ENCODE measurements at regions of chr10 and their contacts with region 1.

Region 1: GRCh38 chr10:118241229-118242137 is 100.6 kb downstream of the FAM204A start:
- DNase-seq: peak; percentile 66 to 93 (median 81)
- H3K4me3 ChIP-seq: peak overlapping the region in 50 of 59 donors; percentile 6 to 57 (median 36)
- H3K27ac ChIP-seq: peak overlapping the region in 2 of 59 donors; percentile 57 to 65
- H3K27me3 ChIP-seq: peaks cover 0 to 66% (median 38%) of the 10 kb centered on the region in 45 donors
- CTCF ChIP-seq: peak; percentile 88 to 100 (median 97)

Region 2: DNA sequence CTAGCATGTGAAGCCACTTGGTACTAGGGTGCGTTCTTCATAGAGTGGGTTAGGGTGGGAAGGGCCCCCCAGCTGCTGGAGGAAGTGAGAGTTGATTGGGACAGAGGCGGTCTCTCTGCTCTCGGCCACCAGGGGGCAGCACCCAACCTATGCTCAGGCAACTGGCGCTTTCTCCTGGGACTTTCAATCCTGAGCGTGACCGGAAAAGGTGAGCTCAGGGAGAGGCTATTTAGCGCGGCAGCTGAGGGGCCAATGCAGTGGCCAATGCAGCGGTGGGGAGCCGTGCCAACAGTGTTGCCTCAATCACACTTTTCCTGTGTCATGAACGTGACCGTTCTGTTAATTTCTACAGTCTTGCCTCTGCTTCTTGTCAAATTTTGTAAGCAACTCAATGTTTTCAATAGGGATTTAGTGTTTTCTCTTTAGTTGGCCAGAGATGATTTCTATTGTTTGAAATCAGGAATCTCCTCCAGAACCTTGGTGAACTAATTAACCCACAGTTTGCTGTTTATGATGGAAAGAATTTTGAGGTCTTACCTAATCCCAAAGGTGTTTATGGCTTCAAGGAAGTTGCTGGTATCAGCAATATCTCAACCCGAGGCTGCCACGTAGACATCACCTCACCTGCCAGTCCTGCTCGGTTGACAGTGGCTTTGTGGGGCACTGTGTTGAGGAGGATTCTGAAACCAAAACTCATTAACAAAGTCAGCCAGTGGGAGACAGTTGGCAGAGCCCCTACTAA is 798.4 kb before region 1 on chr10:
- intact Hi-C with region 1: loop called in 1 of 2 experiments (anchors 5 kb)
- DNase-seq: peak; percentile 54 to 81 (median 74)
- H3K4me3 ChIP-seq: peak overlapping the region in 20 of 59 donors; percentile 13 to 44 (median 32)
- H3K27ac ChIP-seq: peak overlapping the region in 6 of 59 donors; percentile 6 to 48 (median 29)
- H3K27me3 ChIP-seq: peaks cover 0 to 8% (median 0%) of the 10 kb centered on the region in 45 donors
- CTCF ChIP-seq: peak; percentile 74 to 97 (median 89)

Region 3: DNA sequence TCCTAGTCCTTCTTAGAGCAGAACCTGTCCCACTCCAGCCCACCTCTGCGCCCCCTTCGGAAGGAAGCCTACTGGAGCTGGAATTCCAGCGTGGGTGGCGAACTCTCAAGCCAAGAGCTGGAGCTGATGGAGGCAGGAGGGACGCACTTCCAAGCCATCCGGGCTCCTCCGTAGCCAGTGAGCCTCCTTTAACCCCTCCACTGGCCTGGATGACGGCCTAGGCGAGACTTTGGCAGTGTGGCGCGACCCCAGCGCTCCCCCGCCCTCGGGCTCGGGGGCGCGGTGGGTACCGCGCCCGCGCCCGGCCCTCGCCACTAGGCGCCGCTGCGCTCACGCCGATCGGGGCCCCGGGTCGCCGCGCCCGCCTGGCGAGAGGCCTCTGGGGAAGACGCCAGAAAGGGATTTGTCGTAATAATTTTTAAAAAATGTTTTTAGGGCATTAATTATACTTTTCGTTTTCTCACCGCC is 704.0 kb before region 1 on chr10:
- intact Hi-C with region 1: loop called (anchors 1 to 5 kb)
- DNase-seq: no peak
- H3K4me3 ChIP-seq: peak overlapping the region in 49 of 59 donors; percentile 7 to 57 (median 31)
- H3K27ac ChIP-seq: peak overlapping the region in 17 of 59 donors; percentile 11 to 72 (median 47)
- H3K27me3 ChIP-seq: peaks cover 0 to 100% (median 95%) of the 10 kb centered on the region in 45 donors
- CTCF ChIP-seq: peak in 55 of 56 donors; percentile 31 to 88 (median 65)

Region 4: GRCh38 chr10:117616179-117616578 is 625.3 kb before region 1 on chr10:
- intact Hi-C with region 1: no loop called
- DNase-seq: no peak
- H3K4me3 ChIP-seq: no peak overlapping the region
- H3K27ac ChIP-seq: no peak overlapping the region
- H3K27me3 ChIP-seq: peaks cover 0 to 8% (median 0%) of the 10 kb centered on the region in 45 donors
- CTCF ChIP-seq: no peak

Measured in dorsolateral prefrontal cortex (tissue), 120 donors.